ENCODE measurements at regions of chr1 and their contacts with region 1.

Region 1: GRCh38 chr1:23098463-23099170 is 70.0 kb downstream of the LUZP1 start:
- DNase-seq: peak; percentile 72 to 85 (median 77)
- H3K4me3 ChIP-seq: no peak overlapping the region
- H3K27ac ChIP-seq: no peak overlapping the region
- H3K4me1 ChIP-seq: peaks cover 18 to 49% (median 40%) of the 10 kb centered on the region in 4 experiments
- H3K27me3 ChIP-seq: no peaks in the 10 kb centered on the region

Region 2: DNA sequence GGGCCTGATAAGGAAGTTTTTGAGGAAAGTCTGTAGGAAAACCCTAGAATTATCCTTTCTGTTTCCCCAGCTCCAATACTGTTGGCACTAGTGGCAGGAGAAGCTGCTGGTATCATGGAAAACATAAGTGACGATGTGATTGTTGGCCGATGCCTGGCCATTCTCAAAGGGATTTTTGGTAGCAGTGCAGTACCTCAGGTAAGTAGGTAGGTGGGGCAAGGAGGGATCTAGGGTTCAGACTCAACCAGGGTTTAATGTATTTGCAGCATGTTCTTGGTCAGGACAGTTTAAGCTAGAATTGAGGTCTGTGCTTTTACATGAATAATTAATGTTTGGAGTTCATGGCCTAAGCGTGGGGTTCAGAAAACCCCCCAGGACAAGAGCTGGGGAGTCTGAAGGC is 17.2 kb before region 1 on chr1:
- CTCF ChIA-PET with region 1: interaction called, 26 read pairs
- POLR2A ChIA-PET with region 1: no interaction called
- DNase-seq: peak in 2 of 3 donors; percentile 52
- H3K4me3 ChIP-seq: no peak overlapping the region
- H3K27ac ChIP-seq: no peak overlapping the region
- H3K4me1 ChIP-seq: no peaks in the 10 kb centered on the region
- H3K27me3 ChIP-seq: no peaks in the 10 kb centered on the region

Region 3: DNA sequence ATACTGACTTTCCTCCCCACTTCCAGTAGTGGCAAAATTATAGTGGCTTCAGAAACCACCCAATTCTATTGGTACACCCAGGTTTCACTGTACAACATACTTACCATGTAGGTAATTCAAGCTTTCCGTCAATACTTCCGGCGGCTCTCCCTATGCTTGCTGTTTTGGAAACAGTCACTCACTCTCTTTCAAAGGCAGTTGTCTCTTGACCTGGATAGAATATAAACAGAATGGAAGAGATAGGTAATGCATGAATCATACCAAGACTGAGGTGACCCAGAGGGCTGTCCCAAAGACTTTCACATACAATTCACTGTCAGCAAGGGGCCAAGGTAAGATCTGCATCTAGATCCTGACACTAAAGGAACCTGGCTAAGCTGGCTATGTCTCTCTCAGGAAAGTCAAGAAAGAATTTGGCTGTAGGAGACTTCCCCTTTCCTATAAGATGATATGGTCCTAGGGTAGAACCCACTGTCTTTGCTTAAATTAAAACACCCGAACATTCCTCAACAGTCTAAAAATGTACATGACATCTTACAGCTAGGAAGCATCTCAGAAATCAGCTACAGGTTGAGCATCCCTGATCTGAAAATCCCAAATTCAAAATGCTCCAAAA is 10.4 kb after region 1 on chr1:
- CTCF ChIA-PET with region 1: interaction called, 30 read pairs
- POLR2A ChIA-PET with region 1: interaction called, 4 read pairs
- DNase-seq: no peak
- H3K4me3 ChIP-seq: no peak overlapping the region
- H3K27ac ChIP-seq: no peak overlapping the region
- H3K4me1 ChIP-seq: peaks cover 2 to 20% (median 13%) of the 10 kb centered on the region in 4 experiments
- H3K27me3 ChIP-seq: no peaks in the 10 kb centered on the region

Region 4: GRCh38 chr1:23118957-23119792 is 20.6 kb after region 1 on chr1:
- CTCF ChIA-PET with region 1: interaction called, 14 read pairs
- POLR2A ChIA-PET with region 1: no interaction called
- DNase-seq: peak in 2 of 3 donors; percentile 75 to 81
- H3K4me3 ChIP-seq: peak overlapping the region in 5 of 7 experiments; percentile 7 to 45 (median 43)
- H3K27ac ChIP-seq: peak overlapping the region; percentile 50 to 87
- H3K4me1 ChIP-seq: peaks cover 0 to 51% (median 32%) of the 10 kb centered on the region in 4 experiments
- H3K27me3 ChIP-seq: no peaks in the 10 kb centered on the region

Region 5: DNA sequence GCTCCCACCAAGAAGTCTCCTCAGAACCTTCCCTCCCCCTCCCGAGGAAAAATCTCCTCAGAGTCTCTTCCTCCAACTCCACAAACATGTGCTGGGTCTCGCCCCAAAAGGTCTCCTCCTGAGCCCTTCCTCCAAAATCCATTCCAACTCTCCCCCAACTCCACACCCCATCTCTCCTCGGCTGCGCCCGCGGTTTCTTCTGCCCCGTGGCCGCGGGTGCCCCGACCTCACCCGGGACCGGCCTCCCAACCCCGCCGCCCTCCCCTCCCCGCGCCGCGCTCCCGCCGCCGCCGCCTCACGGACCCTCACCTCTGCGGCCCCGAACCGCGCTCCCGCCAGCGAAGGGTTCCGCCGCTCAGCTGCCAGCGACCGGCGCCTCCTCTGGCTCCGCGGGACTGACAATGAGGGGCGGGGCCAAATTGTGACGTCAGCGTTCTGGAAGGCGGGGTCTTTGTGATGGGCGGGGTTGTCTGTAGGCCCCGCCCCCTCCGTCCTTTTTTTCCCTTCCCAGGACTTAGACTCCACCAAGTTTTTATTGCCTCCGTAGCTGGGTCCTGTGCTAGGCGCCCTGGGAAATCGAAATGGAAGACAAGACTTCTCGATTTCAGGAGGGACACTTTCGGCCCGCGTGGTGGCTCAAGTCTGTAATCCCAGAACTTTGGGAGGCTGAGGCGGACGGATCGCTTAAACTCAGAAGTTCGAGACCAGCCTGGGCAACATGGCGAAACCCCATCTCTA is 70.0 kb after region 1 on chr1 and contains the start of gene LUZP1:
- CTCF ChIA-PET with region 1: interaction called, 12 read pairs
- POLR2A ChIA-PET with region 1: interaction called, 7 read pairs
- DNase-seq: peak; percentile 79 to 83 (median 81)
- H3K4me3 ChIP-seq: peak within 1 kb of the TSS; percentile 73 to 93 (median 80)
- H3K27ac ChIP-seq: peak within 1 kb of the TSS; percentile 34 to 83
- H3K4me1 ChIP-seq: peaks cover 6 to 38% (median 29%) of the 10 kb centered on the region in 4 experiments
- H3K27me3 ChIP-seq: no peaks in the 10 kb centered on the region

Region 6: GRCh38 chr1:23177438-23178380 is 79.1 kb after region 1 on chr1:
- CTCF ChIA-PET with region 1: interaction called, 478 read pairs
- POLR2A ChIA-PET with region 1: interaction called, 4 read pairs
- DNase-seq: peak; percentile 71 to 89 (median 83)
- H3K4me3 ChIP-seq: peak overlapping the region; percentile 50 to 85 (median 63)
- H3K27ac ChIP-seq: peak overlapping the region in 1 of 2 experiments; percentile 58
- H3K4me1 ChIP-seq: peaks cover 0 to 26% (median 18%) of the 10 kb centered on the region in 4 experiments
- H3K27me3 ChIP-seq: no peaks in the 10 kb centered on the region

Region 7: GRCh38 chr1:23727362-23727827 is 628.8 kb after region 1 on chr1:
- CTCF ChIA-PET with region 1: no interaction called
- POLR2A ChIA-PET with region 1: no interaction called
- DNase-seq: no peak
- H3K4me3 ChIP-seq: no peak overlapping the region
- H3K27ac ChIP-seq: no peak overlapping the region
- H3K4me1 ChIP-seq: no peaks in the 10 kb centered on the region
- H3K27me3 ChIP-seq: no peaks in the 10 kb centered on the region